Pancreas (tissue), 10 donors: ENCODE measurements at regions of chr11 and their contacts with region 1.

Region 1: GRCh38 chr11:86218125-86219084 is 26.1 kb upstream of the EED start:
- DNase-seq: peak in 5 of 6 donors; percentile 51 to 75 (median 63)
- ATAC-seq: peak; percentile 93 to 100 (median 98)
- H3K4me3 ChIP-seq: no peak overlapping the region
- H3K27ac ChIP-seq: no peak overlapping the region
- H3K4me1 ChIP-seq: peaks cover 0 to 5% (median 0%) of the 10 kb centered on the region in 3 donors
- H3K27me3 ChIP-seq: no peaks in the 10 kb centered on the region
- CTCF ChIP-seq: peak; percentile 67 to 86 (median 82)

Region 2: DNA sequence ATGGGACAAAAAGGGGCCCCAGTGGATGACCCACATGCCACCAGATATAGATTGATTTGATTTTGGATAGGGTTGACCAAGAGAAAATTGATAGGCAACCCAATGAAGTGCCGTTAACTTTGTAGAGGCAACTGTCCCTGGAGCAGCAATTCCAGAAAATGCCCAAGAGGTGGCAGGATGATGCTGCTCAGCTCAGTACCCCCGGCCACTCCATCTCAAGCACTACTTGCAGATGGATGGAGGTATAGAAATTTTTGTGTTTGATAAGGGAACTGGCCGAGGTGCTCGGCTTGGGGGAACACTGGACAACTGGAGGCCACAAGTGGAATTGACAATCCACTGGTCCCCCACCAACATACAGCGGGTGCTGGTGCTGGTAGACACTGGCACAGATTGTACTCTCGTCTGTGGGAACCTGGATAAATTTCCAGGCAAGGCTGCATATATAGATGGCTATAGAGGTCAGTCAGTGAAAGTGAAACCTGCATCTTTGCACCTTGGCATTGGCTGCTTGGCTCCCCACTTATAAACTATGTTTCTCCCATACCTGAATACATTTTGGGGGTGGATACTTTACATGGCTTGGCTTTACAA is 276.9 kb before region 1 on chr11:
- intact Hi-C with region 1: loop called in 1 of 3 experiments (anchors 10 kb)
- DNase-seq: peak in 1 of 6 donors; percentile 48
- ATAC-seq: peak in 3 of 4 donors; percentile 82 to 90 (median 88)
- H3K4me3 ChIP-seq: no peak overlapping the region
- H3K27ac ChIP-seq: no peak overlapping the region
- H3K4me1 ChIP-seq: no peaks in the 10 kb centered on the region
- H3K27me3 ChIP-seq: no peaks in the 10 kb centered on the region
- CTCF ChIP-seq: peak; percentile 9 to 47 (median 39)

Region 3: DNA sequence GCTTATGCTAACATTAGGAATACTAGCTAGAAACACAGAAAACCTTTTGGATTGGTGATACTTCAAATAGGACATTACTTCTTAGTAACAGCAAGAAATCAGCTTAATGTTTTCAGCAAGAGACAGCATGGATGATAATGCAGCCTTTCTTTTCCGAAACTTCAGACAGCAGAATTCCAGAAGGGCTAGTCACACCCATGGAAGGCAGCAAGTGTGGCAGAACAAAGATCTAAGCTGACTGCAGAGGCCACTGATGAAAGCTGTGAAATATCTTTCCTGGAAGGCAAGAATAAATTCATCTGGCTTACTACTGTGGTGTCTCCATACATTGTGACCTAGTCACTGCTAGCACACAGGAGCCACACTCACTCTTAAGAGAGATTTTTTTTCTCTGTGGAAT is 262.9 kb before region 1 on chr11:
- intact Hi-C with region 1: no loop called
- DNase-seq: no peak
- ATAC-seq: peak in 1 of 4 donors; percentile 43
- H3K4me3 ChIP-seq: no peak overlapping the region
- H3K27ac ChIP-seq: no peak overlapping the region
- H3K4me1 ChIP-seq: peaks cover 0 to 2% (median 0%) of the 10 kb centered on the region in 3 donors
- H3K27me3 ChIP-seq: no peaks in the 10 kb centered on the region
- CTCF ChIP-seq: no peak

Region 4: DNA sequence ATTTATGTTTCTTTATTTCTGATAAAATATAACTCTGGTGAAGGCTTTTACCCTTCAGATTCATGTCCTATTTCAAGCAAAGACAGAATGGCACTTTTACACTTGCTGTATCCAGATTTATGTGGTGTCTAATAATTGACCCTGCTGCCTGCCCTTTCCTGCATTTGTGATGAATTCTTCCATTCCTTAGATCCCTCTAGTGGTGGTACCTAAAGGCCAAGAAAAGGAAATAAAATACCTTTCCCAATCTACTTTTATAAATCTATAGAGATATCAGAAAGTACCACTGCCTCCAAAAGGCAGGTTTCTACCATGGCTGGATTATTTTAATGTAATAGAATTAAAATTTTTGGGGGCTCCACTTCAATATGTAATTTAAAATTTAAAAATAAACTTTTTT is 190.4 kb after region 1 on chr11:
- intact Hi-C with region 1: no loop called
- DNase-seq: no peak
- ATAC-seq: no peak
- H3K4me3 ChIP-seq: no peak overlapping the region
- H3K27ac ChIP-seq: no peak overlapping the region
- H3K4me1 ChIP-seq: no peaks in the 10 kb centered on the region
- H3K27me3 ChIP-seq: no peaks in the 10 kb centered on the region
- CTCF ChIP-seq: no peak